ENCODE measurements at regions of chr3 and their contacts with region 1.

Region 1: GRCh38 chr3:4601892-4602291 is 108.7 kb downstream of the ITPR1 start:
- DNase-seq: no peak

Region 2: GRCh38 chr3:4340411-4341335 is 261.2 kb before region 1 on chr3:
- in situ Hi-C with region 1: loop called (anchors 25 kb)
- DNase-seq: peak; percentile 71